IMR-90 (cell line): ENCODE measurements at regions of chr12 and their contacts with region 1.

Region 1: GRCh38 chr12:81644503-81644902 is 114.6 kb downstream of the PPFIA2 start:
- DNase-seq: peak; percentile 36
- ATAC-seq: peak; percentile 68
- H3K4me3 ChIP-seq: no peak overlapping the region
- H3K27ac ChIP-seq: no peak overlapping the region
- H3K4me1 ChIP-seq: no peaks in the 10 kb centered on the region
- H3K27me3 ChIP-seq: no peaks in the 10 kb centered on the region
- CTCF ChIP-seq: peak; percentile 56
- POLR2A ChIP-seq: no peak
- RAD21 ChIP-seq: peak; percentile 50

Region 2: DNA sequence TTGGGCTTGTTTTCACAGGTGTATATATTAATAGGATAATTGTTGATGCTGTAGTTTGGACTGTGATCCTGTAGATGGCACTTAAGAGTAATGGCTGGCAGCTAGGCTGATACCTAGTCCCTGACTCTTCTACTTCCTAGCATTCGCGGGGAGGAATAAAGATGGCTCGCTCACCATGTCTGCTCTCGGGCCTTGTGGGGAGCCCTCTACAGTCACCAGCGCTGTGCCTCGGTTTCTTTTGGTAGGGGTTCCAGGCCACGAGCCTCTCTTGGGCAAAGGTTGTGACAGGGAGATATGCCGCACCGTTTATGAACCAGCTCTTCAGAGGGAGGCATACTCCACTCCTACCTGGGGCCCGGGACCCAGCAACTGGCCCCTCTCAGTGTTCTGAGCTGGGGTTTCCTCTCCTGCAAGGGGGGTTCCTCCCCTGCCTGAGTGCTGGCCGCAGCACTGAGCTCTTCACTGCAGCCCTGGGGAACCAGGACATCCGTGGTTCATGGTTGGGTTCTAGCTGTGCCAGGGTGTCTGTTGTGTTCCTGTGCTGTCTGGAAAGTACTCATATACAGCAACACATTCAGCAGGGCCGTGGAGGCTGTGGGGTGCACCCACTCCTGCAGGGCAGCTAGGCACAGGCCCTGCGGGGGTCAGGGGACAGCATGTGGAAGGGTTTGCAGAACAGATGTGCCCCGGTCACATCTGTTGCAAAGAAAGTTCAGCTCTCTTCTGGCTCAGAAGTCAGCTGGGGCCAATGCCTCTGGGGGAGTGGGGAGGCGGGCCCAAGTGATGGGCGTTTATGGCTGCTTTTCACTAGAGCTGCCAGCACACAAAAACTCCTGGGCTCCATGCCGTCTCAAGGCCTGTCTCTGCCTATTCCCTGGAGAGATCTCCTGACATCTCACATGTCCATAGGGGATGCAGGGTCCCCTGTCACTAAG is 33.3 kb before region 1 on chr12:
- CTCF ChIA-PET with region 1: no interaction called
- POLR2A ChIA-PET with region 1: no interaction called
- dilution Hi-C with region 1: no loop called
- in situ Hi-C with region 1: no loop called
- intact Hi-C with region 1: no loop called
- DNase-seq: peak; percentile 1
- ATAC-seq: no peak; the same call in 1 of the 2 replicates
- H3K4me3 ChIP-seq: no peak overlapping the region
- H3K27ac ChIP-seq: no peak overlapping the region
- H3K4me1 ChIP-seq: no peaks in the 10 kb centered on the region
- H3K27me3 ChIP-seq: no peaks in the 10 kb centered on the region
- CTCF ChIP-seq: peak; percentile 19; the same call in 1 of the 2 replicates
- POLR2A ChIP-seq: no peak
- RAD21 ChIP-seq: no peak

Region 3: GRCh38 chr12:82326905-82327503 is 682.5 kb after region 1 on chr12:
- CTCF ChIA-PET with region 1: no interaction called
- POLR2A ChIA-PET with region 1: no interaction called
- dilution Hi-C with region 1: no loop called
- in situ Hi-C with region 1: loop called (anchors 25 kb)
- intact Hi-C with region 1: loop called (anchors 1 kb)
- DNase-seq: peak; percentile 28
- ATAC-seq: peak; percentile 63
- H3K4me3 ChIP-seq: no peak overlapping the region
- H3K27ac ChIP-seq: no peak overlapping the region
- H3K4me1 ChIP-seq: no peaks in the 10 kb centered on the region
- H3K27me3 ChIP-seq: no peaks in the 10 kb centered on the region
- CTCF ChIP-seq: peak; percentile 52
- POLR2A ChIP-seq: no peak
- RAD21 ChIP-seq: peak; percentile 36; the same call in 1 of the 2 replicates

Region 4: GRCh38 chr12:82619644-82620043 is 975.1 kb after region 1 on chr12:
- CTCF ChIA-PET with region 1: no interaction called
- POLR2A ChIA-PET with region 1: no interaction called
- dilution Hi-C with region 1: no loop called
- in situ Hi-C with region 1: no loop called
- intact Hi-C with region 1: no loop called
- DNase-seq: no peak
- ATAC-seq: no peak
- H3K4me3 ChIP-seq: no peak overlapping the region
- H3K27ac ChIP-seq: no peak overlapping the region
- H3K4me1 ChIP-seq: no peaks in the 10 kb centered on the region
- H3K27me3 ChIP-seq: no peaks in the 10 kb centered on the region
- CTCF ChIP-seq: no peak
- POLR2A ChIP-seq: no peak
- RAD21 ChIP-seq: no peak

Region 5: GRCh38 chr12:83031196-83031595 is 1386.7 kb after region 1 on chr12:
- CTCF ChIA-PET with region 1: no interaction called
- POLR2A ChIA-PET with region 1: no interaction called
- dilution Hi-C with region 1: no loop called
- in situ Hi-C with region 1: no loop called
- intact Hi-C with region 1: no loop called
- DNase-seq: no peak
- ATAC-seq: no peak
- H3K4me3 ChIP-seq: no peak overlapping the region
- H3K27ac ChIP-seq: no peak overlapping the region
- H3K4me1 ChIP-seq: no peaks in the 10 kb centered on the region
- H3K27me3 ChIP-seq: no peaks in the 10 kb centered on the region
- CTCF ChIP-seq: no peak
- POLR2A ChIP-seq: no peak
- RAD21 ChIP-seq: no peak